ENCODE measurements at regions of chr3 and their contacts with region 1.

Region 1: DNA sequence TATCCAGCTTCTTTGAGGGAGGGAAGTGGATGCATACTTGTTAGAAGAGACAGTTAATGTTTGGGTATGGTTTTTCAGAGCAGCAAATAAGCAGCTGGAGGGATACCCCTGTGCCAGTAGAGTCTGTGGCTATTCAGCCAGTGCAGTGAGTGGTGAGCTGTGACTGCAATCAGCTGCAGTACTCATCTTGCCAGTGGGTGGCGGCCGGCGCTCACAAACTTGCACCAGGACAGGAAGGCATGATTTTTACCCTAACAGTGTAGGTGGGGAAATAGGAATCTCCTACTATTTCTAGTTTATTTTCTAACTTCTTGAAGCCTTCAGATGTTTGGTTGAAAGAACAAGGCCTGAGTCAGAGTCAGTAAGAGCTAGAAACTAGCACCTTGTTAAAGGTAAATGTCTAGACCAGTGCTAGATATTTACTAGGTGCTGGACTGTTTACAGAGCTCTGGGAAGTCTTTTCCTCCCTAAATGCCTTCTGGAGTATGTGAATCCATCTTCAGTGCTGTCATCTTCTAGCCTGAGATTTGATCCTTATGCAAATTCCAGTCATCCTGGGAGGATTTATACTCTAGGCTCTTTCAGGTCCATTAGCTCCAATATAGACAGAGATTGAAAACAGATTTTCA is 23.6 kb downstream of the TIMP4 start:
- DNase-seq: peak; percentile 79 to 92
- ATAC-seq: peak; percentile 83
- H3K4me3 ChIP-seq: no peak overlapping the region
- H3K27ac ChIP-seq: no peak overlapping the region
- H3K4me1 ChIP-seq: no peaks in the 10 kb centered on the region
- H3K27me3 ChIP-seq: peaks cover 0 to 3% of the 10 kb centered on the region in 2 donors

Region 2: GRCh38 chr3:12175844-12176453 is 40.8 kb after region 1 on chr3:
- intact Hi-C with region 1: loop called (anchors 1 kb)
- DNase-seq: peak; percentile 70 to 90
- ATAC-seq: peak; percentile 86
- H3K4me3 ChIP-seq: no peak overlapping the region
- H3K27ac ChIP-seq: no peak overlapping the region
- H3K4me1 ChIP-seq: peaks cover 0 to 2% of the 10 kb centered on the region in 2 donors
- H3K27me3 ChIP-seq: no peaks in the 10 kb centered on the region

Region 3: DNA sequence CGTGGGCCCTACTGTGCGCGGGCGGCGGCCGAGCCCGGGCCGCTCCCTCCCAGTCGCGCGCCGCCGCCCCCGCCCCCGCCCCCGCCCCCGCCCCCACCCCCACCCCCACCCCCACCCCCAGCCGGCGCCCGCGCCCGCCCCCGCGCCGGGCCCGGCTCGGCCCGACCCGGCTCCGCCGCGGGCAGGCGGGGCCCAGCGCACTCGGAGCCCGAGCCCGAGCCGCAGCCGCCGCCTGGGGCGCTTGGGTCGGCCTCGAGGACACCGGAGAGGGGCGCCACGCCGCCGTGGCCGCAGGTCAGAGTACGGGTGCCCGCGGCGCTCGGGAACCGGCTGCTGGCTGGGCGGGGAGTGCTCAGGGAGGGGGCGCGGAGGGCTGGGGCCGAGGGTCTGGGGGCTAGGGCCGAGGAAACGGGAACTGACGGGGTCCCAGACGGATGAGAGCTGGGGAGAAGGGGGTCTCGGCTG is 152.6 kb after region 1 on chr3:
- intact Hi-C with region 1: loop called in 1 of 2 experiments (anchors 10 kb)
- DNase-seq: peak; percentile 60 to 81
- ATAC-seq: peak; percentile 77
- H3K4me3 ChIP-seq: peak overlapping the region; percentile 27 to 62
- H3K27ac ChIP-seq: no peak overlapping the region
- H3K4me1 ChIP-seq: no peaks in the 10 kb centered on the region
- H3K27me3 ChIP-seq: no peaks in the 10 kb centered on the region

Region 4: GRCh38 chr3:12706504-12707253 is 571.5 kb after region 1 on chr3:
- intact Hi-C with region 1: loop called in 1 of 2 experiments (anchors 10 kb)
- DNase-seq: peak in 1 of 2 donors; percentile 67
- ATAC-seq: peak; percentile 82
- H3K4me3 ChIP-seq: no peak overlapping the region
- H3K27ac ChIP-seq: no peak overlapping the region
- H3K4me1 ChIP-seq: peaks cover 0 to 2% of the 10 kb centered on the region in 2 donors
- H3K27me3 ChIP-seq: no peaks in the 10 kb centered on the region

Measured in aorta (tissue), 5 donors.